ENCODE measurements at regions of chr2 and their contacts with region 1.

Region 1: DNA sequence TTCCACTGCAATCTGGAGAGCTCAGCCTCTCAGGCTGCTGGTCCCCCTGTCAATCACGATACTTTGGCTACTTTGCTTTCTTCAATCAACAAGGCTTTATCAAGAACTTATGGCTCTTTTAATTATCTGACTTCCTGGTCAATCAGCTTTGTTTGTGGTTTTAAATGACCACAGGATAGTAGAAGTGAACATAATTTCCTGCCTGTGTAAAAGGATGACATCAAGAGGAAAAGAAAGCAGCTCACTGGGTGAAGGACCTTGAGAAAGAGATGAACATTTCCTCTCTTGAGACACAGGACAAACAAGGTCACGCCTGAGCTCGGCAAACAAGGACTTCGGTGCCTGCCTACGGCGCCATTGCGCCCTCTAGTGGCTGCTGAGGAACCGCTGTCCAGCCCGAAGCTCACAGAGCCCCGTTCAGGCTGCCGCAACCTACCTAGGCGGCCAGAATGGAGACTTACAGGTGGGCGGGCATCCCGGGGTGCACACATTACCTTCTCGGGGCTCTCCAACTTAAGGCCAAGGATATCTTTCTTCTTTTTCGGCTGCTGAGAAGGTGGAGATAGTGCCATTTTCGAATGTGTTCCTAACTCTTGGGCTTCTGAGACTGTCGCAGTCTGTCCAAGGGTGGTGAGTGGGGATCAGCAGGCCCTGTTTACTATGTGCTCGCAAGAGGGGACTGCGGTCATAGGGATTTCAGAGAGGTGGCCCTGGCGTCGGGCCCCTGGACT is 54.0 kb downstream of the IL1RL2 start:
- DNase-seq: peak; percentile 83 to 93
- H3K4me3 ChIP-seq: no peak overlapping the region
- H3K27ac ChIP-seq: peak overlapping the region; percentile 39
- H3K4me1 ChIP-seq: peaks cover 16% of the 10 kb centered on the region
- H3K27me3 ChIP-seq: no peaks in the 10 kb centered on the region
- CTCF ChIP-seq: peak; percentile 97

Region 2: GRCh38 chr2:101419096-101419663 is 821.6 kb before region 1 on chr2:
- CTCF ChIA-PET with region 1: no interaction called
- POLR2A ChIA-PET with region 1: no interaction called
- intact Hi-C with region 1: loop called (anchors 2 kb)
- DNase-seq: peak; percentile 34 to 47
- H3K4me3 ChIP-seq: no peak overlapping the region
- H3K27ac ChIP-seq: no peak overlapping the region
- H3K4me1 ChIP-seq: 0 out of 2 replicates have a peak, but pooled peaks cover 5% of the 10 kb centered on the region
- H3K27me3 ChIP-seq: no peaks in the 10 kb centered on the region
- CTCF ChIP-seq: peak; percentile 90

Region 3: DNA sequence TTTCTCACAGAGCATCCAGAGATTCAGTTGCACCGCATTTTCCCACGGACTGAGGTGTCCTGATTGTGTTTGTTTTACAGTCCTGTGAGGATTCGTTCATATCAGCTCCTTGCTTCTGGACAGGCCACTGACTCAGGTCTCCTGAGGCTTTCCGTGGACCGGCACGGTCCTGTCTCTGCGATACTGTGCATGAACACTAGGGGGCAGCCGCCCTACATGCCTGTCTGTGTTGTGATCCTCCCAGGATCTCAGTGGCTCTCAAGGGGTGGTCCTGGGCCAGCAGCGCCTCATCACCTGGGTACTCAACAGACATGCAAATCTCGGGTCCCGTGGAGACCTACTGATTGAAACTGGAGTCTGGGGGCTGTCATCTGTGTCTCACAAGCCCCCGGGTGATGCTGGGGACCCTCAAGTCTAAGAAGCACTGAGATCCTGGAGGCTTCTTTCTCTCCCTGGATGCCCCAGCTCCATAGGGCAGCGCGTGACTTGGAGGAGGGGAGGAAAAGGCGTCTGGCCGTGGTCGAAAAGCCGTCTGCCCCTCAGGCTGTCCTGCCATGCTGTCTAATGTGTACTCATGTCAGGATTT is 220.1 kb before region 1 on chr2:
- CTCF ChIA-PET with region 1: interaction called, 23 read pairs
- POLR2A ChIA-PET with region 1: no interaction called
- intact Hi-C with region 1: loop called (anchors 1 kb)
- DNase-seq: peak; percentile 53 to 77
- H3K4me3 ChIP-seq: no peak overlapping the region
- H3K27ac ChIP-seq: no peak overlapping the region
- H3K4me1 ChIP-seq: 0 out of 2 replicates have a peak, but pooled peaks cover 4% of the 10 kb centered on the region
- H3K27me3 ChIP-seq: no peaks in the 10 kb centered on the region
- CTCF ChIP-seq: peak; percentile 98

Region 4: DNA sequence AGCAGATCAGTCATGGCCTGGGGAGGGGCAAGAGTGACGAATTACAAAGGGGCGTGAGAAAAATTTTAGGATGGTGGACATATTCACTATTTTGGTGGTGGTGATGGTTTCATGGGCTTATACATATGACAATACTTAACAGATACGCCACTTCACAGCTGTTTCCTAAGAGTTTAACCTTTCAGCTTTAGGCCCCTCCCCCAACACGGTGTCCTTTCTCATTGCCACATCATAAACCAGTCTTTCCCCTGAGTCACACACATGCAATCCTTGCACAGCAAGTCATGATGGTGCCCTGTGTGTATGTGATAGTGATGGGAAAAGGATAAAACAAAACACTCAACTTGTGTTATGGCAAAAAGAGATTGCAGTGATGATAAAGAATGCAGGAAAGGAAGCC is 145.9 kb before region 1 on chr2:
- CTCF ChIA-PET with region 1: no interaction called
- POLR2A ChIA-PET with region 1: no interaction called
- intact Hi-C with region 1: no loop called
- DNase-seq: peak in 1 of 2 experiments; percentile 72
- H3K4me3 ChIP-seq: no peak overlapping the region
- H3K27ac ChIP-seq: 0 out of 2 replicates have a peak overlapping the region, but pooled peaks have one; percentile 16
- H3K4me1 ChIP-seq: peaks cover 32% of the 10 kb centered on the region
- H3K27me3 ChIP-seq: no peaks in the 10 kb centered on the region
- CTCF ChIP-seq: no peak

Region 5: GRCh38 chr2:102139851-102140250 is 101.0 kb before region 1 on chr2:
- CTCF ChIA-PET with region 1: no interaction called
- POLR2A ChIA-PET with region 1: no interaction called
- intact Hi-C with region 1: loop called (anchors 1 kb)
- DNase-seq: peak in 1 of 2 experiments; percentile 49
- H3K4me3 ChIP-seq: no peak overlapping the region
- H3K27ac ChIP-seq: no peak overlapping the region
- H3K4me1 ChIP-seq: peaks cover 6% of the 10 kb centered on the region; the same call in 1 of the 2 replicates
- H3K27me3 ChIP-seq: no peaks in the 10 kb centered on the region
- CTCF ChIP-seq: no peak

Region 6: DNA sequence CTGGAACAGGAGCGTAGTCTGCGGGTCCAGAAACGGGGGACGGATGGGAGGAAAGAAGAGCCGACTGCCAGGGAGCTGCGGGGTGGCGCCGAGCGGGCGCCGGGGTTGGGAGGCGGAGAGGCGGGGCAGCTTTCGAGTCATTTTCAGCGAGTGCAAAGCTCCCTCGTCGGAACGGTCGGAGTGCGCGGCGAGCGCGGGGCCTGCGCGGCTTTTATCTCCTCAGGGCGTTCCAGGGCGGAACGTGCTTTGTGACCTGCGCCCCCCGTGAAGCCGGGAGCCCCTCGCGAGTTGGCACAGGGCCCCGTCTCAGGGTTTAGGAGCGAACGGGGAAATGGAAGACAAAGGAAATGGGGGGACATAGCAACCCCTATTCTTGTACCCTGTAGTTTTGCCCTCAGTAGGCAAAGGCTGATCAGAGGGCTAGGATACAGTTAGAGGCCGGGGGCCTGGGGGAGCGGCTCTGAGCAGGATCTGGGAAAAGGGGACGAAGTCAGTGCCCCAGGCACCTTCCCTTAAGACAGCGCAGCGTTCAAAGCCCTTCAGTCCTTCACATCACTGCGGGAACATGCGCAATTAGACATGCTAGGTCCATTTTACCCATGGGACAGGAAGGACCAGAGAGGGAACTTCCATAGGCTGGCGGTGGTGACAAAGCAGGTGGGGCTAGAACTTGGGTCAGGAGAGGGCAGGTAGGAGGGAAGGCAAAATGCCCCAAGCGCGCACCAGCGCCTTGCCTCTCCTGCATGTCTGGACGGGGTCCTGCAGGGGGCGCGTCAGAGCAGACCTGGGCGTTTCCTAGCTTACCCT is 10.4 kb after region 1 on chr2:
- CTCF ChIA-PET with region 1: interaction called, 11 read pairs
- POLR2A ChIA-PET with region 1: no interaction called
- intact Hi-C with region 1: no loop called
- DNase-seq: peak in 1 of 2 experiments; percentile 69
- H3K4me3 ChIP-seq: peak overlapping the region; percentile 6; the same call in 1 of the 2 replicates
- H3K27ac ChIP-seq: no peak overlapping the region
- H3K4me1 ChIP-seq: peaks cover 9% of the 10 kb centered on the region
- H3K27me3 ChIP-seq: no peaks in the 10 kb centered on the region
- CTCF ChIP-seq: peak; percentile 48